ENCODE measurements at regions of chr11 and their contacts with region 1.

Region 1: DNA sequence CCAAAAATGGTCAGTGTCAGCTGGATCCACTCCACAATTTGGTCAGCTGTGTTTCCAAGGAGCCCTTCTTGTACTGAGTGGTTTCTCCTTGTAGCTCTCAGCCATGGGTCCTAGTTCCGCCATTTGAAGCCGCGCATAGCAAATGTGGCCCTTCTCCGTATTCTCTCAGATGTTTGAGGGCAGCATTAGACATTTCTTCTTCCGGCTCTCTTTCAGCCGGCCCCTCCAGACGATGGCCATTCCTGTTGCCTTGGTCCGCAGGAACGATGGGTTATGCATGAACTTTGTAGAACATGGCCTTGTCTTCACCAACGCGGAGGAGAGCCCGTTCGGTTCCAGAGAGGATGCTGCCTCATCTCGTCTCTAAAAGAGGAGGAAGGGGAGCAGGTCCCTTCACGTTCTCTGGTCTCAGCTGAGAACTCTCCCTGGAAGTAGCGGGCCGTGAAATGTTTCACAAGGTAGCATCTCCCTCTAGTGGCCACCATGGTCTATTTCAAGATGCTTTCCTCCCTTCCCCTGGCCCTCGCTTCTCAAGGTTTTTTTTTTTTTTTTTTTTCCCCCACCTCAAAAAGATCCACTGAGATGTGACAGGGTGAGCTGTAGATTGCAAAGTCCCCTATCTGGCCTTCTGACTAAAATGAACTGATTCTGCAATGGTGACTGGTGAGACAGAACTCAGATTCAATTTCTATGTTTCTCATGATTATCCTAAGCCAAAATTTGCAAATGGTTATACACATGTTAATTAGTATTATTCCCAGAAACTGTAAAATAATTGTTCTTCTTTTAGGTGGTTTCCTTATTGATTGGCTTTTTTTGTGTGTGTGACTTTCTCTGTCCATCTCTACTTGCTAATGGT is 19.8 kb upstream of the PLET1 start:
- DNase-seq: no peak
- H3K4me3 ChIP-seq: peak overlapping the region; percentile 33
- H3K27me3 ChIP-seq: peaks cover 1% of the 10 kb centered on the region; the same call in 1 of the 2 replicates
- CTCF ChIP-seq: peak; percentile 79

Region 2: GRCh38 chr11:112219476-112220232 is 60.8 kb before region 1 on chr11:
- CTCF ChIA-PET with region 1: interaction called, 560 read pairs
- POLR2A ChIA-PET with region 1: interaction called, 16 read pairs
- DNase-seq: no peak
- H3K4me3 ChIP-seq: no peak overlapping the region
- H3K27me3 ChIP-seq: no peaks in the 10 kb centered on the region
- CTCF ChIP-seq: peak; percentile 61

Region 3: DNA sequence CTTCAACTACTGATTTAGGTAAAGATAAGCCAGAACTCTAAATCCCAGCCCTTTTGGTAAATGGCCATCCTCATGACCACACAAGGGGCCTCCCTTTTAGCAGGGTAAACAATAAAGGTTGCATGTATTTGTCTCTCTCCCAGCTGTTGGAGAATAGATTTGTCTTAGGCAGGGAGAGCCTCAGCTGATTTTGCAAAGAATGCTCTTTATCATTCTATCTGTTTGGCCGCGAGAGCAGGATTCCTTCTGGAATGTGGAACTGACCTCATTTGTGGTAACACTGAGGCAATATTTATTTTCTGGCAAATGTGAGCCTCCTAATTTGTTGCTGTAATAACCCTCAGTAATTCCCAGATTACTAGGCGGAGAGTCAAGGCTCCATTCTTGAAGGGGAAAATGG is 39.0 kb before region 1 on chr11:
- CTCF ChIA-PET with region 1: interaction called, 13 read pairs
- POLR2A ChIA-PET with region 1: no interaction called
- DNase-seq: peak; percentile 84
- H3K4me3 ChIP-seq: no peak overlapping the region
- H3K27me3 ChIP-seq: no peaks in the 10 kb centered on the region
- CTCF ChIP-seq: no peak

Region 4: GRCh38 chr11:112265721-112266409 is 14.6 kb before region 1 on chr11:
- CTCF ChIA-PET with region 1: interaction called, 13 read pairs
- POLR2A ChIA-PET with region 1: interaction called, 5 read pairs
- DNase-seq: peak; percentile 88
- H3K4me3 ChIP-seq: no peak overlapping the region
- H3K27me3 ChIP-seq: no peaks in the 10 kb centered on the region
- CTCF ChIP-seq: no peak

Region 5: GRCh38 chr11:112734207-112734606 is 453.7 kb after region 1 on chr11:
- CTCF ChIA-PET with region 1: no interaction called
- POLR2A ChIA-PET with region 1: no interaction called
- DNase-seq: no peak
- H3K4me3 ChIP-seq: no peak overlapping the region
- H3K27me3 ChIP-seq: no peaks in the 10 kb centered on the region
- CTCF ChIP-seq: no peak

Region 6: DNA sequence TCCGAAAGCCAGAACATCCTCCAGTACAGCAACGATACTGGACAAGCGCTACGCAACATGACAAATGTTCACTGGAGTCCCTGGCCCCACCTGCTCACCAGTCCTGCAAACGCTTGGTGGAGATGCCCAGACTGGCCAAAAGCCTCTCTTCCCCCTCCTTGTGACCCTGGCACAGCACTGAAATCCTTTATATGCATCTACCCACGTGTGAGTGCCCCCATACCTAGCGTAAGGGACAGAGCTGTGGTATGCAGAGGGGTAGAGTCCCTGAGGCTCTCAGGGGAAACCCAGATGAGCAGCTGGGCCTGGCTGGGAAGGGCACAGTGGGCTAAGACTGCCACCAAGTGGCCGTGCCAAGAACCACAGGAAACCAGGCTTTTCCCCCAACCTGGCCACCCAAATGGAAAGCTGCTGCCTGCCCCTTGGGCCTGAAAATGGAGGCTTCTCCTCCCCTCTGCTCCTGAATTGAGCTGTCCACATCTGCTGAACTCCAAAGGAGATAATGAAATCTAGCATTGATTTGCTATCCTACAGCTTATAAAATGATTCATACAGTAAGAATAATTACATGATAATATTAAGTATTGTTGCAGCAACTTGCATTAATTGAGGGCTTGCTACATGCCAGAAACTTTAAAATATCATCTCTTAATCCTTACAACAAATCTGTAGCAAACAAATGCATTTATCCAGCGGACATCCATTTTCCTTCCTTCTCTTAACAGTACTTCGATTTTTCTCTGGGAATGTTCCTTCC is 1009.1 kb after region 1 on chr11:
- CTCF ChIA-PET with region 1: interaction called, 11 read pairs
- POLR2A ChIA-PET with region 1: no interaction called
- DNase-seq: no peak
- H3K4me3 ChIP-seq: no peak overlapping the region
- H3K27me3 ChIP-seq: peaks cover 8% of the 10 kb centered on the region
- CTCF ChIP-seq: peak; percentile 97

Measured in BJ (cell line).